ENCODE measurements at regions of chr9 and their contacts with region 1.

Region 1: DNA sequence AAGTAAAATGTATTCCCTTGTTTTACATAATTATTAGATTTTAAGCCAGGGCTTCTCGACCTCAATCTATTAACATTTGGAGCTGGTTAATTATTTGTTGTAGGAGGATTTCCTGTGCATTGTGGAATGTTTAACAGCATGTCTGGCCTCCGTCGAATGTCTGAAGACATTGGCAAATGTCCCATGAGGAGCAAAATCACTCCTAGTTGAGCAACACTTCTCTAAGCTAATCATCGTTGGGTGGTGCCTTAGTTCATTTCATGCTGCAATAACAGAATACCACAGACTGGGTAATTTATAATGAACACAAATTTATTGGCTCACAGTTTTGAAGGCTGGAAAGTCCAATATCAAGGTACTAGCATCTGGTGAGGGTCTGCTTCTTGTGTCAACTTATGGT is 13.4 kb upstream of the VPS13A start:
- DNase-seq: no peak
- ATAC-seq: no peak
- H3K4me3 ChIP-seq: no peak overlapping the region
- H3K4me3 Mint-ChIP-seq: no peak overlapping the region
- H3K27ac ChIP-seq: no peak overlapping the region
- H3K27ac Mint-ChIP-seq: no peak overlapping the region
- H3K4me1 ChIP-seq: no peaks in the 10 kb centered on the region
- H3K4me1 Mint-ChIP-seq: peaks cover 1% of the 10 kb centered on the region
- H3K27me3 ChIP-seq: peaks cover 0 to 3% of the 10 kb centered on the region in 2 experiments
- H3K27me3 Mint-ChIP-seq: peaks cover 8% of the 10 kb centered on the region
- CTCF ChIP-seq: no peak

Region 2: GRCh38 chr9:77092536-77092935 is 71.3 kb before region 1 on chr9:
- CTCF ChIA-PET with region 1: no interaction called
- POLR2A ChIA-PET with region 1: no interaction called
- intact Hi-C with region 1: no loop called
- DNase-seq: no peak
- ATAC-seq: no peak
- H3K4me3 ChIP-seq: no peak overlapping the region
- H3K4me3 Mint-ChIP-seq: no peak overlapping the region
- H3K27ac ChIP-seq: no peak overlapping the region
- H3K27ac Mint-ChIP-seq: no peak overlapping the region
- H3K4me1 ChIP-seq: no peaks in the 10 kb centered on the region
- H3K4me1 Mint-ChIP-seq: no peaks in the 10 kb centered on the region
- H3K27me3 ChIP-seq: no peaks in the 10 kb centered on the region
- H3K27me3 Mint-ChIP-seq: peaks cover 13% of the 10 kb centered on the region
- CTCF ChIP-seq: no peak

Region 3: GRCh38 chr9:77111408-77111807 is 52.5 kb before region 1 on chr9:
- CTCF ChIA-PET with region 1: no interaction called
- POLR2A ChIA-PET with region 1: no interaction called
- intact Hi-C with region 1: no loop called
- DNase-seq: no peak
- ATAC-seq: no peak
- H3K4me3 ChIP-seq: no peak overlapping the region
- H3K4me3 Mint-ChIP-seq: no peak overlapping the region
- H3K27ac ChIP-seq: no peak overlapping the region
- H3K27ac Mint-ChIP-seq: no peak overlapping the region
- H3K4me1 ChIP-seq: no peaks in the 10 kb centered on the region
- H3K4me1 Mint-ChIP-seq: no peaks in the 10 kb centered on the region
- H3K27me3 ChIP-seq: no peaks in the 10 kb centered on the region
- H3K27me3 Mint-ChIP-seq: peaks cover 17% of the 10 kb centered on the region
- CTCF ChIP-seq: no peak

Region 4: DNA sequence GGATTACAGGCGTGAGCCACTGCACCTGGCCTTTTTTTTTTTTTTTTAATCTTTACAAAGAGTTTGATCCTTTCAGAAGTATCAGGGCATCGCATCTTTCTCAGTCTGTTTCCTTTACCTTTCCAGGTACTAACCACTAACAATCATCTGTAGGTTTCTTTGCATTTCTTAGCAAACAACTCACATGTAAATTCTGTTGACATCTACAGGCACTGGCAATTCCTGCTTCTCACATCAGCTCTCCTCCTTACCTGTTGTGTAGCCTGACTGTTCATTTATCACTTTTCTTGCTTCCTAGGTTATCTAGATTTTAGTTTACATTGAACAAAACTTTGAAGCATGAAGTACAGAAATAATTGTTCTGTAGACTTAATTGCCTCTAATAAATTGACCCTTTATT is 14.0 kb before region 1 on chr9:
- CTCF ChIA-PET with region 1: interaction called, 22 read pairs
- POLR2A ChIA-PET with region 1: no interaction called
- intact Hi-C with region 1: no loop called
- DNase-seq: no peak
- ATAC-seq: no peak
- H3K4me3 ChIP-seq: no peak overlapping the region
- H3K4me3 Mint-ChIP-seq: no peak overlapping the region
- H3K27ac ChIP-seq: no peak overlapping the region
- H3K27ac Mint-ChIP-seq: no peak overlapping the region
- H3K4me1 ChIP-seq: no peaks in the 10 kb centered on the region
- H3K4me1 Mint-ChIP-seq: no peaks in the 10 kb centered on the region
- H3K27me3 ChIP-seq: peaks cover 0 to 2% of the 10 kb centered on the region in 2 experiments
- H3K27me3 Mint-ChIP-seq: peaks cover 20% of the 10 kb centered on the region
- CTCF ChIP-seq: no peak

Region 5: DNA sequence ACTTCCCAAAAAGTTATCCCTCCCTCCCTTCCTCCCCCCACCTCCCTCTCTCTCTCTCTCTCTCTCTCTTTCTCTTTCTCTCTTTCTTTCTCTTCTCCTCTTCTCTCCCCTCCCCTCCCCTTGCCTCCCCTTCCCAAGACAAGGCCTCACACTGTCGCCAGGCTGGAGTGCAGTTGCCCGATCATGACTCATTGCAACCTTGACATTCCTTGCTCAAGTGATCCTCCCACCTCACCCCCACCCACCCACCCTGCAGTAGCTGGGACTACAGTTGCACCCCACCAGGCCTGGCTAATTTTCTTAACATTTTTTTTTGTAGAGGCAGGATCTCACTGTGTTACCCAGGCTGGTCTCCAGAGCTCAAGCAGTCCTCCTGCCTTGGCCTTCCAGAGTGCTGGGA is 46.2 kb after region 1 on chr9:
- CTCF ChIA-PET with region 1: interaction called, 4 read pairs
- POLR2A ChIA-PET with region 1: no interaction called
- intact Hi-C with region 1: loop called (anchors 2 kb)
- DNase-seq: no peak
- ATAC-seq: no peak
- H3K4me3 ChIP-seq: no peak overlapping the region
- H3K4me3 Mint-ChIP-seq: no peak overlapping the region
- H3K27ac ChIP-seq: no peak overlapping the region
- H3K27ac Mint-ChIP-seq: no peak overlapping the region
- H3K4me1 ChIP-seq: no peaks in the 10 kb centered on the region
- H3K4me1 Mint-ChIP-seq: no peaks in the 10 kb centered on the region
- H3K27me3 ChIP-seq: no peaks in the 10 kb centered on the region
- H3K27me3 Mint-ChIP-seq: no peaks in the 10 kb centered on the region
- CTCF ChIP-seq: no peak

Region 6: GRCh38 chr9:77224746-77225312 is 60.9 kb after region 1 on chr9:
- CTCF ChIA-PET with region 1: interaction called, 11 read pairs
- POLR2A ChIA-PET with region 1: interaction called, 3 read pairs
- intact Hi-C with region 1: no loop called
- DNase-seq: no peak
- ATAC-seq: no peak
- H3K4me3 ChIP-seq: no peak overlapping the region
- H3K4me3 Mint-ChIP-seq: no peak overlapping the region
- H3K27ac ChIP-seq: no peak overlapping the region
- H3K27ac Mint-ChIP-seq: no peak overlapping the region
- H3K4me1 ChIP-seq: no peaks in the 10 kb centered on the region
- H3K4me1 Mint-ChIP-seq: no peaks in the 10 kb centered on the region
- H3K27me3 ChIP-seq: no peaks in the 10 kb centered on the region
- H3K27me3 Mint-ChIP-seq: no peaks in the 10 kb centered on the region
- CTCF ChIP-seq: no peak

Region 7: DNA sequence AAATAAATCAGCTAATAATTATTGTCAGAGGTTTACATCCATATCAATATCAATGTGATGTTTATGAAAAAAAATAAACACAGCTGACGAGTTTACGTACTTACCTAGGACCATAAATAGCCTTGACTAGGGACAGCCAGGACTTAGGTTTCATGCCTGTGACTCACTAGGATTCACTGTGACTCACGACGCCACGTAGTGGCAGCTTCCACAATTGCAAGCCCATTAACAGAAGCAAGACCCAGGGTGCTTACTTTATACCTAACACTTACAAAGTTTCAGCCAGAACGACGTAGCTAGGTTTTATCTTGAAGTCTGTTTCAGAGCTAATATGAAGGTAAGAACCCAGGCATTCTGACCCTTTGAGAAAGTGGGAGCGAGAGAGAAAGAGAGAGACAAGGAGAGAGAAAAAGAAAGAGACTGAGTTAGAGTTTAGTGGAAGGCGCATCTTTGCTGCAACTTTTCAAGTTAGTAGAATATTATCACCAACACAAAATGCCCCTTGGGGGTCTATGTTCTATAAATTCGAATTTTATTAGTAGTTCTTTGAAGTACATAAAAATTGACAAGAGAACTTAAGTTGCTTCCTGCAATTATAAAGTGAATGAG is 293.0 kb after region 1 on chr9:
- CTCF ChIA-PET with region 1: interaction called, 11 read pairs
- POLR2A ChIA-PET with region 1: no interaction called
- intact Hi-C with region 1: loop called (anchors 1 to 5 kb)
- DNase-seq: peak; percentile 63 to 81 (median 74)
- ATAC-seq: peak; percentile 85
- H3K4me3 ChIP-seq: no peak overlapping the region
- H3K4me3 Mint-ChIP-seq: no peak overlapping the region
- H3K27ac ChIP-seq: no peak overlapping the region
- H3K27ac Mint-ChIP-seq: no peak overlapping the region
- H3K4me1 ChIP-seq: no peaks in the 10 kb centered on the region
- H3K4me1 Mint-ChIP-seq: peaks cover 15% of the 10 kb centered on the region
- H3K27me3 ChIP-seq: no peaks in the 10 kb centered on the region
- H3K27me3 Mint-ChIP-seq: no peaks in the 10 kb centered on the region
- CTCF ChIP-seq: peak; percentile 74

Region 8: GRCh38 chr9:78397454-78397853 is 1233.6 kb after region 1 on chr9:
- CTCF ChIA-PET with region 1: no interaction called
- POLR2A ChIA-PET with region 1: no interaction called
- intact Hi-C with region 1: no loop called
- DNase-seq: no peak
- ATAC-seq: no peak
- H3K4me3 ChIP-seq: no peak overlapping the region
- H3K4me3 Mint-ChIP-seq: no peak overlapping the region
- H3K27ac ChIP-seq: no peak overlapping the region
- H3K27ac Mint-ChIP-seq: no peak overlapping the region
- H3K4me1 ChIP-seq: no peaks in the 10 kb centered on the region
- H3K4me1 Mint-ChIP-seq: no peaks in the 10 kb centered on the region
- H3K27me3 ChIP-seq: no peaks in the 10 kb centered on the region
- H3K27me3 Mint-ChIP-seq: peaks cover 2% of the 10 kb centered on the region
- CTCF ChIP-seq: no peak

Measured in CD8-positive, alpha-beta T cell (primary cell).